ENCODE measurements at regions of chr2 and their contacts with region 1.

Region 1: DNA sequence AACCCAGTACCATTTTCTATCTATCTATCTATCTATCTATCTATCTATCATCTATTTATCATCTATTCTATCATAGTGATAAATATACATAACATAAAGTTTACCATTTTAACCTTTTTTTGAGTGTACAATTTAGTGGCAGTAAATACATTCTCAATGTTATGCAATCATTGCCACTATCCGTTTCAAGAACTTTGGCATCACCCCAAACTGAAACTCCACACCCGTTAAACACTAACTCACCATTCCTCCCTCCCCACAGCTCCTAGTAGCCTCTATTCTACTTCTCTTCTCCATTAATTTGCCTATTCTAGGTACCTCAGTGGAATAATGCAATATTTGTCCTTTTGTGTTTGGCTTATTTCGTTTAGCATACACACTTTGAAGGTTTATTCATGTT is 82.5 kb upstream of the KCNE4 start:
- DNase-seq: no peak
- H3K4me3 ChIP-seq: no peak overlapping the region
- H3K27ac ChIP-seq: no peak overlapping the region
- H3K4me1 ChIP-seq: no peaks in the 10 kb centered on the region
- H3K27me3 ChIP-seq: peaks cover 0 to 10% of the 10 kb centered on the region in 2 experiments
- CTCF ChIP-seq: no peak
- POLR2A ChIP-seq: no peak

Region 2: DNA sequence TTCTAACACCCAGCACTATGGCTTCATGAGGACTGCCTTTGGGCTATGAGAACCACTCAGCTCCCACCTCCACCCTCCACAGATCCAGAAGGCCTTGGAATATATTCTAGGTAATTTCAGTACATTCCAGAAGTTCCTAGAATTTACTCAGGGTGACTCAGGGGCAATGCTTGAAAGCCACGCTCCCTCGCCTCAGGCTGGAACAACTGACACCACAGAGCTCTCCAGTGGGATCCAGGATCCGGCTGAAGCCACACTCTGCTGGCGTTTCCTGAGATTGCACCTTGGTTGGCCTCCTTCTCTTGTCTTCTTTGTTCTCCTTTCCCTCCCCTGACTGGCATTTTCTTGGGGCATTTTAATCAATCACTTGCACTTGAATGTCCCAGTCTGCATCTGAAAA is 10.2 kb before region 1 on chr2:
- CTCF ChIA-PET with region 1: interaction called, 10 read pairs
- POLR2A ChIA-PET with region 1: no interaction called
- dilution Hi-C with region 1: no loop called
- intact Hi-C with region 1: no loop called
- DNase-seq: no peak
- H3K4me3 ChIP-seq: no peak overlapping the region
- H3K27ac ChIP-seq: no peak overlapping the region
- H3K4me1 ChIP-seq: no peaks in the 10 kb centered on the region
- H3K27me3 ChIP-seq: peaks cover 0 to 8% of the 10 kb centered on the region in 2 experiments
- CTCF ChIP-seq: no peak
- POLR2A ChIP-seq: no peak

Region 3: GRCh38 chr2:223101340-223102039 is 132.0 kb after region 1 on chr2:
- CTCF ChIA-PET with region 1: interaction called, 73 read pairs
- POLR2A ChIA-PET with region 1: no interaction called
- dilution Hi-C with region 1: no loop called
- intact Hi-C with region 1: loop called (anchors 1 kb)
- DNase-seq: peak; percentile 51
- H3K4me3 ChIP-seq: no peak overlapping the region
- H3K27ac ChIP-seq: no peak overlapping the region
- H3K4me1 ChIP-seq: no peaks in the 10 kb centered on the region
- H3K27me3 ChIP-seq: no peaks in the 10 kb centered on the region
- CTCF ChIP-seq: peak; percentile 24 to 52
- POLR2A ChIP-seq: no peak

Region 4: DNA sequence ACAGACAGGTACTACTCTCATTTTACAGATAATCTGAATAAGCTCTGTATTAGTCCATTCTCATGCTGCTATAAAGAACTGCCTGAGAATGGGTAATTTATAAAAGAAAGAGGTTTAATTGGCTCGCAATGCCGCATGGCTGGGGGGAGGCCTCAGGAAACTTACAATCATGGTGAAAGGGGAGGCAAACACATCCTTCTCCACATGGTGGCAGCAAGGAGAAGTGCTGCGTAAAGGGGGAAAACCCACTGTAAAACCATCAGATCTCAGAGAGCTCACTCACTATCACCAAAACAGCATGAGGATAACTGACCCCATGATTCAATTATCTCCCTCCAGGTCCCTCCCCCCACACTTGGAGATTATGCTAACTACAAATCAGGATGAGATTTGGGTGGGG is 336.9 kb after region 1 on chr2:
- CTCF ChIA-PET with region 1: interaction called, 12 read pairs
- POLR2A ChIA-PET with region 1: no interaction called
- dilution Hi-C with region 1: no loop called
- intact Hi-C with region 1: loop called (anchors 1 kb)
- DNase-seq: peak; percentile 12
- H3K4me3 ChIP-seq: no peak overlapping the region
- H3K27ac ChIP-seq: no peak overlapping the region
- H3K4me1 ChIP-seq: no peaks in the 10 kb centered on the region
- H3K27me3 ChIP-seq: no peaks in the 10 kb centered on the region
- CTCF ChIP-seq: peak; percentile 15 to 40
- POLR2A ChIP-seq: no peak

Region 5: GRCh38 chr2:223459328-223459939 is 489.9 kb after region 1 on chr2:
- CTCF ChIA-PET with region 1: interaction called, 8 read pairs
- POLR2A ChIA-PET with region 1: no interaction called
- dilution Hi-C with region 1: no loop called
- intact Hi-C with region 1: loop called (anchors 1 kb)
- DNase-seq: peak; percentile 26
- H3K4me3 ChIP-seq: no peak overlapping the region
- H3K27ac ChIP-seq: no peak overlapping the region
- H3K4me1 ChIP-seq: peaks cover 6% of the 10 kb centered on the region
- H3K27me3 ChIP-seq: no peaks in the 10 kb centered on the region
- CTCF ChIP-seq: peak; percentile 12 to 17
- POLR2A ChIP-seq: no peak

Region 6: DNA sequence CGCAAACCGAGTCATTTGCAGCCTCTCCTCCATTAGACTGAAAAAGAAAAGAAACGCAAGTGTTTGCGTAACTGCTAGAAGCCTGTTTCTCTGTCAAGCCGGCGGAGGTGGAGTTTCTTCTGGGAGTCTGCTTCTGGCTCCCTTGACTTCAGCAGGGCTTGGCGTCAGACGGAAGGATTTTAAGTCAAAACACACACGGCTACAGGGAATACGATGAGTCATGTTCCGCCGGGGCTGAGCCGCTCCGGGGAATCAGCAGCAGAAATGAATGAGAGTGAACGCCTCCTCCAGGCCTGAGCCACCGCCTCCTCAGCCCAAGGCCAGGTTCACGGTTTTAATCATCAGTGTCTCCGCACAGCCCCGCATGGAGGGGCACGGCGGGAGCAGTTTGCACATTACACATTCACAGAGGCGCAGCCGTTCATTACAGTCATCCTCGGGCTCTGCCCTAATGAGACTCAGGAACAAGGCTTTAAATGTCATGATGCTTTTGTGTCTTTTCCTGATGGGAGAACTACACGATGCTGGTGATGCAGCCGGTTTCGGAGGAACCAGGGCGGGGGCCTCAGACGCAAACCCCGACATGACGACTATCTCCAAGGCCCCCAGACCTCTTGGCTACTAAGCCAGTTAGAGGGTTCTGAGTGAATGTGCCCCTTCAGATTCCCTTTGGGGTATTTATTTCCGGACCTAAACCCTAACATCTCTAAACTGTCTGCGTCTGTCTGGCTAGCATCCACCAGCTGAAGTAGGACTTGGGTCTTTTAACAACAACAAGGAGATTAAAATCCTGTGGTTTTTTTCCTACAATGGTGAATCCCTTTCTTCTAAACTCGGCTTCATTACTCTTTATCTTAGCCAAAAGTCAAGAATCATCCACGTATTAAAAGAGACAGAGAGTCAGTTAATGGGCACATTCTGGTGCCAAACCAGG is 643.8 kb after region 1 on chr2:
- CTCF ChIA-PET with region 1: no interaction called
- POLR2A ChIA-PET with region 1: no interaction called
- dilution Hi-C with region 1: no loop called
- intact Hi-C with region 1: loop called (anchors 1 kb)
- DNase-seq: peak; percentile 94
- H3K4me3 ChIP-seq: peak overlapping the region in 1 of 3 experiments; percentile 41
- H3K27ac ChIP-seq: peak overlapping the region; percentile 30
- H3K4me1 ChIP-seq: peaks cover 10% of the 10 kb centered on the region
- H3K27me3 ChIP-seq: peaks cover under 1 to 2% of the 10 kb centered on the region in 2 experiments
- CTCF ChIP-seq: peak in 1 of 2 donors; percentile 8
- POLR2A ChIP-seq: no peak

Region 7: GRCh38 chr2:223860809-223861738 is 891.6 kb after region 1 on chr2:
- CTCF ChIA-PET with region 1: interaction called, 12 read pairs
- POLR2A ChIA-PET with region 1: no interaction called
- dilution Hi-C with region 1: no loop called
- intact Hi-C with region 1: loop called (anchors 5 kb)
- DNase-seq: no peak
- H3K4me3 ChIP-seq: no peak overlapping the region
- H3K27ac ChIP-seq: no peak overlapping the region
- H3K4me1 ChIP-seq: no peaks in the 10 kb centered on the region
- H3K27me3 ChIP-seq: no peaks in the 10 kb centered on the region
- CTCF ChIP-seq: no peak
- POLR2A ChIP-seq: no peak

Measured in endothelial cell of umbilical vein (primary cell).